ENCODE measurements at regions of chr10 and their contacts with region 1.

Region 1: GRCh38 chr10:6171881-6172695 is 30.6 kb upstream of the PFKFB3 start:
- DNase-seq: no peak
- ATAC-seq: no peak
- H3K4me3 Mint-ChIP-seq: no peak overlapping the region
- H3K27ac Mint-ChIP-seq: no peak overlapping the region
- H3K4me1 Mint-ChIP-seq: peaks cover 55% of the 10 kb centered on the region
- H3K27me3 Mint-ChIP-seq: no peaks in the 10 kb centered on the region

Region 2: GRCh38 chr10:5917305-5917704 is 254.8 kb before region 1 on chr10:
- CTCF ChIA-PET with region 1: no interaction called
- DNase-seq: no peak
- ATAC-seq: no peak
- H3K4me3 Mint-ChIP-seq: no peak overlapping the region
- H3K27ac Mint-ChIP-seq: no peak overlapping the region
- H3K4me1 Mint-ChIP-seq: no peaks in the 10 kb centered on the region
- H3K27me3 Mint-ChIP-seq: no peaks in the 10 kb centered on the region

Region 3: GRCh38 chr10:6136215-6137201 is 35.6 kb before region 1 on chr10:
- CTCF ChIA-PET with region 1: interaction called, 13 read pairs
- DNase-seq: peak; percentile 83
- ATAC-seq: peak; percentile 65
- H3K4me3 Mint-ChIP-seq: peak overlapping the region; percentile 41
- H3K27ac Mint-ChIP-seq: peak overlapping the region; percentile 52
- H3K4me1 Mint-ChIP-seq: peaks cover 57% of the 10 kb centered on the region
- H3K27me3 Mint-ChIP-seq: peaks cover 25% of the 10 kb centered on the region

Region 4: DNA sequence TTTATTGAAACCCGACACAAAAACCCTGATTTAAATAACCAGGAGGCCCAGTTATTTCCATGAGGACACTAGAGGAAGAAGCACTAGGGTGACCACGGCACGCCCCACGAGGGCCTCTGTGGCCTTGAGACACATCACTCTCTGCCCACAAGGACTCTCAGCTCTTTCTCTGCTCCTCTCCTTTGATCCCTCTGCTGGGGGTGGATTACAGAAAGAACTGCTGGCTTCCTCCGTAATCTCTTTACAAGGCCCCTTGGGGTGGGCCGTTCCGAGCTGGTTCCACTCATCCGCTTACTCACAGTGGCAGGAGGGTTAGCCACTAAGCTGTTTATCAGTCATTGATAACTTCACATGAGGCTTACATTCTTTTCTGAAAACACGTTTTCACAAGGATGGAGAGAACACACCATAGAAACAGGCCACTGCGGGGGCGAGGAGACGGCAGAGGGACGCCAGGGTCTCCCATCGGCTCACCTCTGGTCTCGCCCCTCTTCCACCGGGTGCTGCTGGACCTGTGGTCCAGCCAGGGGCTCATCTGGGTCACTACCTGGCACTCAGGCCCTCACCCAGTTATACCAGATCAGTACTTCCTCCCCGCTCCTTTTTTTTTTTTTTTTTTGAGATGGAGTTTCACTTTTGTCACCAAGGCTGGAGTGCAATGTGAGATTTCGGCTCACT is 13.1 kb after region 1 on chr10:
- CTCF ChIA-PET with region 1: interaction called, 10 read pairs
- DNase-seq: no peak
- ATAC-seq: peak; percentile 21
- H3K4me3 Mint-ChIP-seq: no peak overlapping the region
- H3K27ac Mint-ChIP-seq: peak overlapping the region; percentile 71
- H3K4me1 Mint-ChIP-seq: peaks cover 33% of the 10 kb centered on the region
- H3K27me3 Mint-ChIP-seq: no peaks in the 10 kb centered on the region

Region 5: GRCh38 chr10:6239213-6239991 is 67.3 kb after region 1 on chr10:
- CTCF ChIA-PET with region 1: no interaction called
- DNase-seq: peak; percentile 91
- ATAC-seq: peak; percentile 99
- H3K4me3 Mint-ChIP-seq: no peak overlapping the region
- H3K27ac Mint-ChIP-seq: peak overlapping the region; percentile 18
- H3K4me1 Mint-ChIP-seq: peaks cover 37% of the 10 kb centered on the region
- H3K27me3 Mint-ChIP-seq: no peaks in the 10 kb centered on the region